Posterior cingulate gyrus (tissue), 11 donors: ENCODE measurements at regions of chr12 and their contacts with region 1.

Region 1: DNA sequence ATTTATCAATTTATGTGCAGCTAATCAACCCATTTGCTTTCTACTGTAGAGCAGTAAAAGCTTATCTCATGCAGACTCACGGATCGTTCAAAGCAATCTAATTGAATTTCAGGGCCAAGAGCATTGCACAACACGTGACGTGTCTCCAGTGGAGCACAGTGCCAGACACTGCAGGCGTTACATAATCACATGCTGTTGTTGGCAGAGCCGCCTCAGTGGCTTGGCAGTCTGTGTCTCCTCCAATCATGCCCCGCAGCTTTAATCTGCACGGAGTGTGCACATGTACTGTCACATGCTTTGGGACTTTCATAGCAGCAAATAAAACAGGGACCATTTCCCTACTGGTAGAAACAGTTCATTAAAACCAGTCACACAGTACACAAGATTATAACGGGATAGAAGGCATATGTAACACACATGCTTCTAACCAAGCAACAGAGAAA is 309.3 kb downstream of the ITPR2 start:
- DNase-seq: peak; percentile 80 to 97 (median 84)

Region 2: DNA sequence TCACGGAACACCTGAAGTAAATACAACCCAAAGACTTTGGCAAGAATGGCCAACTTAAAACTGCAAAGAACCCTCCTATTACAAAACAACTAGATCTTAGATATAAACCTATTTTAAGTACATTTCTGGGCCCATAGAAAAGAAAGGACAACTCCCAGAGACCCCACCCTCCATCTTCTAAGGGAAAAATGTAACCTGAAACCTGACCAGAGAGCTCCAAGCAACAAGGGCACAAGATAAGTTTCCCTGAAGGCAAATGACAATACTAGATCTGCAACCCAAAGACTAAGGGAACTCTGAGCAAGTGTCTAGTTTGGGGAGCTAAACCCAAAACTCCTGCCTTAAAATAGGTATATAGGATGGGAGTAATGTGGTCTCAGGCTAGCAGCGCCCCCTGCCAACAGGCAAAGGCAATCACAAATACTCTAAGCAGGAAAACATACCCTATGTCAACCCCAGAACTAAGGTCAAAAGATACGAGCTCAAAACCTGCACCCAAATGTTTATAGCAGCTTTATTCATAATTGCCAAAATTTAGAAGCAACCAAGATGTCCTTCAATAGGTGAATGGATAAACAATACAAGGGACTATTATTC is 90.4 kb after region 1 on chr12:
- intact Hi-C with region 1: loop called (anchors 10 kb)
- DNase-seq: peak in 7 of 10 donors; percentile 25 to 90 (median 36)